Dendritic cell treated with granulocyte-macrophage colony-stimulating factor and Interleukin-4, amounts not matched to agents 40 ng/mL and 50 ng/mL, for 4 days (primary cell): ENCODE measurements at regions of chr3 and their contacts with region 1.

Region 1: DNA sequence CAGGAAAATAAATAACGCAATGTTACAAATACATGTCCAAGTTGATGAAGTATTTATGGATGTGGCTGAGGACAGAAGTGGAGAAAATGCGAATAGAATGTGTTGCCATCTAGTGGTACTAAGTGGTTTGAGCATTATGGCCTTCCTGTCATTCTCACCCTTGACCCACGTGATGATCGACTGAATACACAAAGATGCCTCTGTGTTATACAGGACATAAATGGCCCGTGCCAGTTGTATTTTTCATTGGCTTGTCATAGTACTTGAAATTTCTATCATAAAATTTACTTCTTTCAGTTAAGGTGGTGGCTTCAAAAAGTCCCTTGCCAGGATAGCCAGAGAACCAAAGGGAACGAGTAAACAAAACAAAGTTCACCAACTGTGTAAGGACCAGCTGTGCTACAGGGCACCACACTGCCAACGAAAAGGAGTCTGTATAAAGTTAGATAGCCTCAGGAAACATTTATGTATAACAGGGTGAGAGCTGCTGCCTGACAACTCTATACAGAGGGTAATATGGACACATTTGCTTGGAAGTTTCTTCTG is 103.7 kb downstream of the MYH15 start:
- H3K4me3 Mint-ChIP-seq: no peak overlapping the region
- H3K27ac Mint-ChIP-seq: no peak overlapping the region
- H3K4me1 Mint-ChIP-seq: peaks cover 16% of the 10 kb centered on the region
- H3K27me3 Mint-ChIP-seq: no peaks in the 10 kb centered on the region

Region 2: GRCh38 chr3:107938143-107938542 is 468.6 kb before region 1 on chr3:
- intact Hi-C with region 1: loop called (anchors 5 kb)
- H3K4me3 Mint-ChIP-seq: no peak overlapping the region
- H3K27ac Mint-ChIP-seq: no peak overlapping the region
- H3K4me1 Mint-ChIP-seq: peaks cover 15% of the 10 kb centered on the region
- H3K27me3 Mint-ChIP-seq: no peaks in the 10 kb centered on the region